Right ventricle myocardium superior (tissue), 1 donor: ENCODE measurements at regions of chr11 and their contacts with region 1.

Region 1: DNA sequence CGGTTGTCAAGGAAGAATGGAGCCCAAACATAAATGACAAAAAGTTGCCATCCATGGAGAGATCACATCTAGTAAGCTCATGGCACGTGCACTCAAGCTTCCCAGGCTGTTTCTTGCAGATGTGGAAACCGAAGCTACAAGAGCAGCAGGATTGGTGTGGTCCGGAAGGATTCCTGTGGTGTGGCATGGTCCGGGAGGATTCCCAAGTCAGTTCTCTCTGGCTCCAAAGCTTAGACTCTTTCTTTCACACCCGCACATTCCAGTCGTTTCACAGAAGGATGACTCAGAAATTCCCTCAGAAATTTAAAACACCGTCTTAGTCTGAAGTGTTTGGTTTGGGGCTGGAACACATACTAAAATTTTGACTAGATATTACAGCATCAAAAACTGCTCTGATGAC is 78.0 kb upstream of the DRD2 start:
- DNase-seq: no peak
- ATAC-seq: no peak

Region 2: GRCh38 chr11:113730887-113731726 is 177.9 kb after region 1 on chr11:
- intact Hi-C with region 1: loop called (anchors 10 kb)
- DNase-seq: no peak
- ATAC-seq: peak; percentile 53